ENCODE measurements at regions of chr3 and their contacts with region 1.

Region 1: DNA sequence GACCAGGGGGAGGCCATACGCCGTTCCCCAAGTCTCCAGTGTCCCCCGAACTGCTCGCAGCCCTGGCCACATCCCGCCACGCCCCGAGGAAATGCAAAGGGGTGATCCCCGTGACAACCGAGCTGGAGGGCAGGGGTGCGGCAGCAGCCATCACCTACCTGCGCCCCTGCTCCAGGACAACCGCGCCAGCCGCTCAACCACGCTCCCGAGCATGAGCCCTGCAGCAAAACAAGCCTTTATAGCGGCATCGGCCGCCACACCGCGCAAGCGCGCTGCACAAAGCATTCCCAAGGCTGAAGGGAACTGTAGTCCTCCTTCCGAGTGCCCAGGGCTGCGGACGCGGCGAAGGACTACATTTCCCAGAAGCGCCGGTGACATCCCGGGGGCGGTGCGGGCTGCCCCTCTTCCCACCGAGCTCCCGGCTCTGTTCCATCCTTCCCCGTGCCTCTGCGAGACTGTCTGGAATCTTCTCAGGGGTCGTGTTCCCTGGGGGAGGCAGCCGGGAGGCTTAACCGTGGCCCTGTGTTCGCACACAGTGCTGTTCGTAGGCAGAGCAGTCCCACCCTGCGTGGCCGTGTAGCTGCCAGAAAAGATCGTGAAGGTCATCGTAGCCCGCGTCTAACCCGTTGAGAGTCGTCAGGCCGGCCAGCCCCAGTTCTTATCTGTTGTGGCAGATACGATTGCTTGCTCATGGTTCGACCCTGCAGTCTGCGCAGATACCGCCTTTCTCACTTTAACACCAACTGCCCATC is at the start of gene ABCC5:
- DNase-seq: peak; percentile 75
- H3K4me3 ChIP-seq: peak within 1 kb of the TSS; percentile 98
- CTCF ChIP-seq: no peak

Region 2: DNA sequence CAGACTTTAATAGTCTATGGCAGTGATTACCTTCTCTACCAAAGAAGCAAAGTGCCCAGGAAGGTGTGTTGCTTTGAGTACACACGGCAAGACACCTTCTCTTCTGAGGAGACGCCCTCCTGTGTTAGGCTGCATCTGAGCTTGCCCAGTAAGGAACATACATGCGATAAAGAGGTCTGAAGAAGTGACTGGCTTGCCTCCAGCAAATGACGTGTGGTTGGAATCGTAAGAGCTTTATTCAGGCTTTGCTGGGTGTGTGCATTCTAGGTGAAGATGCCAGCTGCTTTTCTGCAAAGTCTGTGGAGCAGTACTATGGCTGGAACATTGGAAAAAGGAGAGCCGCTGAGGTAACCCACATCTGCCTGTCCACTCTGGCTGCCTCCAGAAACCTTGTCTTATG is 214.9 kb before region 1 on chr3:
- in situ Hi-C with region 1: no loop called
- DNase-seq: no peak
- H3K4me3 ChIP-seq: no peak overlapping the region
- CTCF ChIP-seq: no peak

Region 3: GRCh38 chr3:183895296-183895695 is 122.6 kb before region 1 on chr3:
- in situ Hi-C with region 1: loop called (anchors 10 kb)
- DNase-seq: peak; percentile 24
- H3K4me3 ChIP-seq: no peak overlapping the region
- CTCF ChIP-seq: peak; percentile 85